ENCODE measurements at regions of chr1 and their contacts with region 1.

Region 1: GRCh38 chr1:19374083-19374801 is 62.1 kb downstream of the SLC66A1 start:
- DNase-seq: peak in 1 of 2 experiments; percentile 78
- H3K4me3 ChIP-seq: no peak overlapping the region
- H3K27ac ChIP-seq: no peak overlapping the region
- H3K4me1 ChIP-seq: no peaks in the 10 kb centered on the region
- H3K27me3 ChIP-seq: no peaks in the 10 kb centered on the region
- CTCF ChIP-seq: peak; percentile 54 to 80 (median 79)
- EP300 ChIP-seq: no peak
- POLR2A ChIP-seq: no peak
- RAD21 ChIP-seq: peak; percentile 35 to 41; a peak in 3 of 4 replicates

Region 2: DNA sequence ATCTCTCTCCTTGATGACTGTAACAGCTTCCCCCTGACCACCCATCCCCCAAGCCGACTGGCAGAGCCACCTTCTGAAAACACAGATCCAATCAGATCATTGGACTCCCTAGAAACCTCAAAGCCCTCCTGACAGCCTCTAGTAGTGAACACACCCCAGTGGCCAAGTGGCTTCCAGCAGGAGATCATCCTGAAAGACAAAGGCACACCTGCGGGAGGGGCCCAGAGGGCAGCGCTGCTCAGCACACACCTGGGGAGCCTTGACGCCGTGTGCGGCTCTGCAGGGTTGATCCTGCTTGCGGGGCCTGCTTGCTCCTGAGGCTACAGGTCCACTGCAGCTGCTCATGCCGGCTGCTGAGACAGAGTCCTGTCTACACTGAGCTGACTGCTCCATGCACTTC is 20.6 kb before region 1 on chr1:
- CTCF ChIA-PET with region 1: interaction called, 29 read pairs
- POLR2A ChIA-PET with region 1: interaction called, 3 read pairs
- DNase-seq: peak; percentile 73 to 79
- H3K4me3 ChIP-seq: no peak overlapping the region
- H3K27ac ChIP-seq: no peak overlapping the region; the same call in 1 of the 2 replicates
- H3K4me1 ChIP-seq: peaks cover 8 to 24% (median 17%) of the 10 kb centered on the region in 4 experiments
- H3K27me3 ChIP-seq: no peaks in the 10 kb centered on the region
- CTCF ChIP-seq: peak in 2 of 3 experiments; percentile 17 to 19; a peak in 3 of 4 replicates
- EP300 ChIP-seq: peak in 1 of 2 experiments; percentile 81; a peak in 1 of 3 replicates
- POLR2A ChIP-seq: no peak
- RAD21 ChIP-seq: peak in 1 of 2 experiments; percentile 7; a peak in 1 of 4 replicates

Region 3: GRCh38 chr1:19390901-19391595 is 16.8 kb after region 1 on chr1:
- CTCF ChIA-PET with region 1: interaction called, 70 read pairs
- POLR2A ChIA-PET with region 1: interaction called, 3 read pairs
- DNase-seq: no peak
- H3K4me3 ChIP-seq: no peak overlapping the region
- H3K27ac ChIP-seq: no peak overlapping the region
- H3K4me1 ChIP-seq: peaks cover 0 to 7% (median 4%) of the 10 kb centered on the region in 4 experiments; a peak in 5 of 7 replicates
- H3K27me3 ChIP-seq: no peaks in the 10 kb centered on the region
- CTCF ChIP-seq: peak; percentile 68 to 86 (median 73)
- EP300 ChIP-seq: no peak
- POLR2A ChIP-seq: no peak
- RAD21 ChIP-seq: peak; percentile 52 to 61

Region 4: DNA sequence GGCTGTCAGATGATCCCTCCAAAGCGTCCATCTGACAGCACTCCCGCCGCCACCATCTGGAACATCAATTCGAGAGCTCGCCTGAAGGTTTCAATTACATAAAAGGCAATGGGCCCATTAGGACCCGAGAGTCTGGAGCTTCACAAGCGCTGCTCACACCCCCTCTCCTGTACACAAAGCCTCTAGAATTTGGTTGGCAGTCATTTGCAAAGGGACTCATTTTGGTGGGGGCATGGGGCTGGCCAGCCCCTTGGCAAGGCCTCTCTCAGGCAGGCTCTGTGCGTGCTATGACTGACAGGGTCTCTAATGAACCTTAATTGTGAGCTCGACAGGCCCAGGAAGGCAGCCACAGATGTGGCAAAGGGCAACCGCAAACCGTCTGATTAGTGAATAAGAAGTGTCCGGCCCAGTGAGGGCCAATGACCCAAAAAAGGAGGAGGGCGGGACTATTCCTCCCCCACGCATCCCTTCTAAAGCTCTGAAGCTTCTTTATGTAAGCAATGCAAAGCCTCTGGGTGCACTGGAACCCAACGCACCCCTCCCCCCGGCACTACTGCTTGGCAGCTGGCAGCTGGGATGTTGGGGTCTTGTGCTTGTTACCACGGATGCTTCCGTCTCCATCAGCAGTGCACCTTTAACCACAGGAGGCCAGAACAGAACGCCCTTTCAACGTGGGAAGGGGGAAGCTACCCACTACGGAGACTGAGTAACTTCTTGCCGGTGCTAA is 31.7 kb after region 1 on chr1:
- CTCF ChIA-PET with region 1: interaction called, 14 read pairs
- POLR2A ChIA-PET with region 1: interaction called, 3 read pairs
- DNase-seq: no peak
- H3K4me3 ChIP-seq: no peak overlapping the region
- H3K27ac ChIP-seq: no peak overlapping the region
- H3K4me1 ChIP-seq: peaks cover 18 to 31% (median 22%) of the 10 kb centered on the region in 4 experiments
- H3K27me3 ChIP-seq: no peaks in the 10 kb centered on the region
- CTCF ChIP-seq: no peak
- EP300 ChIP-seq: no peak
- POLR2A ChIP-seq: no peak
- RAD21 ChIP-seq: no peak

Region 5: GRCh38 chr1:19651141-19651737 is 277.0 kb after region 1 on chr1:
- CTCF ChIA-PET with region 1: interaction called, 10 read pairs
- POLR2A ChIA-PET with region 1: no interaction called
- DNase-seq: peak in 1 of 2 experiments; percentile 71
- H3K4me3 ChIP-seq: no peak overlapping the region
- H3K27ac ChIP-seq: no peak overlapping the region
- H3K4me1 ChIP-seq: peaks cover 0 to 3% (median 2%) of the 10 kb centered on the region in 4 experiments; a peak in 4 of 7 replicates
- H3K27me3 ChIP-seq: peaks cover 0 to 4% (median 1%) of the 10 kb centered on the region in 4 experiments; a peak in 4 of 7 replicates
- CTCF ChIP-seq: peak; percentile 78 to 84 (median 78)
- EP300 ChIP-seq: no peak
- POLR2A ChIP-seq: no peak
- RAD21 ChIP-seq: peak; percentile 89 to 91